ENCODE measurements at regions of chr12 and their contacts with region 1.

Region 1: DNA sequence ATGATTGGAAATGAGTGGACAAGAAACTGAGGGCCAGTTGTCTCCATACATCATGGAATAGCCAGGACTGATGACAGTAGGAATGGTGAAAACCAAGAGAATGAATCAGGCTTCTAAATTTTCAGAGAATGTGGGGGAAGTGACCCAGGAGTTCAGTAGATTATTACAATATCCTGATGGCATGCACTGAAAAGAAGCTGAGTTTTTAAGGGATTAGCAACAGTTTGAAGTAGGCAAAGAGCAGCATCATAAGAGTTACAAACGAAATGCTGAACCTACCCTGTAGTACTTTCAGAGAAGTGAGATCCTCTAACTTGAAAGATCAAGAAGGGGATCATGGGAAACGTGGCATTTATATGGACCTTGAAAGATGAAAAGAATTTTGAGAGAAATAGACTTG is 13.2 kb downstream of the SLC2A14 start:
- DNase-seq: no peak
- ATAC-seq: no peak
- H3K4me3 Mint-ChIP-seq: no peak overlapping the region
- H3K27ac Mint-ChIP-seq: no peak overlapping the region
- H3K4me1 Mint-ChIP-seq: peaks cover 16% of the 10 kb centered on the region
- H3K27me3 Mint-ChIP-seq: no peaks in the 10 kb centered on the region

Region 2: GRCh38 chr12:7915559-7916403 is 56.2 kb after region 1 on chr12:
- CTCF ChIA-PET with region 1: no interaction called
- POLR2A ChIA-PET with region 1: no interaction called
- intact Hi-C with region 1: loop called in 1 of 2 experiments (anchors 5 kb)
- DNase-seq: peak; percentile 65
- ATAC-seq: peak; percentile 62
- H3K4me3 Mint-ChIP-seq: no peak overlapping the region
- H3K27ac Mint-ChIP-seq: no peak overlapping the region
- H3K4me1 Mint-ChIP-seq: peaks cover 24% of the 10 kb centered on the region
- H3K27me3 Mint-ChIP-seq: no peaks in the 10 kb centered on the region

Measured in activated CD4-positive, alpha-beta T cell treated with anti-CD3 and anti-CD28 coated beads for 36 hours (primary cell).